ENCODE measurements at regions of chr5 and their contacts with region 1.

Region 1: GRCh38 chr5:151115274-151115905 is 34.6 kb upstream of the TNIP1 start:
- DNase-seq: peak; percentile 77 to 80
- H3K4me3 ChIP-seq: no peak overlapping the region
- H3K27ac ChIP-seq: peak overlapping the region in 1 of 2 donors; percentile 55
- H3K4me1 ChIP-seq: no peaks in the 10 kb centered on the region
- H3K27me3 ChIP-seq: no peaks in the 10 kb centered on the region
- CTCF ChIP-seq: peak; percentile 94 to 97 (median 94)
- POLR2A ChIP-seq: no peak

Region 2: GRCh38 chr5:151005950-151006576 is 109.3 kb before region 1 on chr5:
- intact Hi-C with region 1: loop called (anchors 5 kb)
- DNase-seq: peak; percentile 92 to 95
- H3K4me3 ChIP-seq: no peak overlapping the region
- H3K27ac ChIP-seq: peak overlapping the region; percentile 80 to 83
- H3K4me1 ChIP-seq: peaks cover 10 to 16% of the 10 kb centered on the region in 2 donors
- H3K27me3 ChIP-seq: no peaks in the 10 kb centered on the region
- CTCF ChIP-seq: no peak
- POLR2A ChIP-seq: no peak

Measured in uterus (tissue), 4 donors.